ENCODE measurements at regions of chr2 and their contacts with region 1.

Region 1: DNA sequence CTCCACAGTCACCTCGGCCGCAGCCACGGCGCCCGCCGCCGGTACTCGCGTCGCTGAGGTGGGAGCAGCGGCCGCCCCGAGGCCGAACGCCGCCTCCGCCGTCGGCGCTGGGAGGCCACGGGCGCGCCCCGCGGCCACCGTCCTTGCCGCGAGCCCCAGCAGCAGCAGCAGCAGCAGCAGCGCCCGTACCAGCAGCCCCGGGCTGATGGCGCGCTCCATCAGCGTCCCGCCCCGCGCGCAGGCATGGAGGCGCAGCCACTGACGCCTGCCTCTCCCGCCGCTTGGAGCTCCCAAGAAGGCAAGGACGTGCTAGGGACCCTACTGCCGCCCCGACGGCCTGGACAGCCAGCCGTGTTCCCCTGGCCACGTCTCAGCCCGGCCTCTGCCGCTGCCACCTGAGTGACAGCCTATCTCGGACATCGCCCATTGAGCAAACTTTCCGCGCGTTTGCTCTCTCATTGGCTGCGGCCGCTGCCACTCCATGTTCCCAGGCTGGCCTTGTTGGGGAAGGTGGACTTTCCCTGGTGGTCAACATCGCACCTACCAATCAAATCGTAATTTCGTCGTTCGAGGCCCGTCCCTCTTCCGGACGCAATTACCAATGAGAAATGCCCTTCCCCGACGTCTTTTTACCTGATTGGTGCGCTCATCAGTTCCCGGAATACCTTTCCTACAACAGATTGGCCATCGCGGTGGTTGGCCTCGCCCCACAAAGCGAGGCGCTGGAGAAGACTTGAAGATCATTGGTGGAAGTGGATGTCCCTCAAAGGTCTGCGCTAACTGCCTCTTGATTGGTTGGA is at the start of gene EIF2AK3:
- DNase-seq: peak; percentile 96 to 99
- ATAC-seq: peak; percentile 78 to 92 (median 82)
- H3K4me3 ChIP-seq: peak within 1 kb of the TSS; percentile 90
- H3K4me3 Mint-ChIP-seq: peak within 1 kb of the TSS; percentile 91
- H3K27ac ChIP-seq: peak within 1 kb of the TSS; percentile 98
- H3K27ac Mint-ChIP-seq: no peak within 1 kb of the TSS
- H3K4me1 ChIP-seq: peaks cover 19% of the 10 kb centered on the region
- H3K4me1 Mint-ChIP-seq: peaks cover 6% of the 10 kb centered on the region in 2 donors
- H3K27me3 ChIP-seq: no peaks in the 10 kb centered on the region
- H3K27me3 Mint-ChIP-seq: no peaks in the 10 kb centered on the region
- CTCF ChIP-seq: no peak
- total RNA-seq, gene EIF2AK3: 29.9 to 43.7 (median 33.4) TPM

Region 2: DNA sequence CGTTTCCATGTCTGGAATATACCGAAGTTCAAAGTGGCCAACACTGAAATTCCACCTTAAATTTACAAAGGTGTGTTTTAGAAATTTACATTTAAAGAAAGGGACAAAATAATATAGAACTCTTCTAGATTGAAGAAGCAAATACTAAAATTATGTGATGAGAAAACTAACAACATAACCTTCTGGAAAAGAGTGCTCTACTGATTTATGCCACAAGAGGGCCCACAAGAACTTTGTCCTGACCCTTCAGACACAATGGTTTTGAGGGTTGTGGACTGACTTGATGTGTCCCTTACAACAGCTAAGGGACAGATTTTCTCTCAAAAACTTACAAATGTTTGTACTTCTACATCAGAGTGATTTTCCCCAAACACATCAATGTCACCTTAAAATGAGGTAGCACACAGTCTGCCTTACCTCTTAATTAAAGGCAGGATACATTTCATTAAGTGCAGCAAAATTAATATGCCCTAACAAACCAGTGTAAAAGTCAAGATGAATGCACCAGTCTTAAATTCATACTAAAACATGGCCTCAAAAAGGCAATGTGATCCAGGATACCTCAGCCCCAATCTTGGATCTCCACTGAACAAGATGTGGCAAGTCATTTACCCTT is 36.1 kb before region 1 on chr2:
- intact Hi-C with region 1: loop called (anchors 5 kb)
- DNase-seq: peak in 1 of 2 donors; percentile 74
- ATAC-seq: peak; percentile 88 to 99 (median 93)
- H3K4me3 ChIP-seq: no peak overlapping the region
- H3K4me3 Mint-ChIP-seq: no peak overlapping the region
- H3K27ac ChIP-seq: no peak overlapping the region
- H3K27ac Mint-ChIP-seq: peak overlapping the region in 1 of 2 donors; percentile 48
- H3K4me1 ChIP-seq: no peaks in the 10 kb centered on the region
- H3K4me1 Mint-ChIP-seq: peaks cover 6 to 7% of the 10 kb centered on the region in 2 donors
- H3K27me3 ChIP-seq: no peaks in the 10 kb centered on the region
- H3K27me3 Mint-ChIP-seq: no peaks in the 10 kb centered on the region
- CTCF ChIP-seq: peak; percentile 87

Region 3: DNA sequence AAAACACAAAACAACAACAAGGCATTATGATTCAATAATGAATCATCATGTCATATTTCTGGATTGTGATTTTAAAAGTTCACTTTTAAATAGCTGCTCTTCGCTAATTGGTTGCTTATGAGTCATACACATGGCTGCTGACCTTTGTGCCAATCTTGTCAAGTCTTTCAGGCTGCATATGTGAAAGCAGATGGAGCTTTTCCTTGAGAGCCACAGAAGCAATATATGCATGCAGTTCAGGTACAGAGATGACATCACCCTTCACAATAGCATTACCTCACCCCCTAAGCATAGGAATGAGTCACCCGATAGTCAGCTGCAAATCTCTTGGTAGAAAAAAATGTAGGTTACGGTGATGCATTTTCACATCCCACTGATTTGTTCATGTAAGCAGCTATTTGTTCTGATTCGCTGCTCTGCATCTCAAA is 27.2 kb before region 1 on chr2:
- intact Hi-C with region 1: loop called (anchors 1 kb)
- DNase-seq: peak in 1 of 2 donors; percentile 79
- ATAC-seq: peak; percentile 85 to 94 (median 89)
- H3K4me3 ChIP-seq: no peak overlapping the region
- H3K4me3 Mint-ChIP-seq: no peak overlapping the region
- H3K27ac ChIP-seq: peak overlapping the region; percentile 85
- H3K27ac Mint-ChIP-seq: peak overlapping the region; percentile 47 to 73
- H3K4me1 ChIP-seq: no peaks in the 10 kb centered on the region
- H3K4me1 Mint-ChIP-seq: peaks cover 42 to 51% of the 10 kb centered on the region in 2 donors
- H3K27me3 ChIP-seq: no peaks in the 10 kb centered on the region
- H3K27me3 Mint-ChIP-seq: no peaks in the 10 kb centered on the region
- CTCF ChIP-seq: no peak

Region 4: DNA sequence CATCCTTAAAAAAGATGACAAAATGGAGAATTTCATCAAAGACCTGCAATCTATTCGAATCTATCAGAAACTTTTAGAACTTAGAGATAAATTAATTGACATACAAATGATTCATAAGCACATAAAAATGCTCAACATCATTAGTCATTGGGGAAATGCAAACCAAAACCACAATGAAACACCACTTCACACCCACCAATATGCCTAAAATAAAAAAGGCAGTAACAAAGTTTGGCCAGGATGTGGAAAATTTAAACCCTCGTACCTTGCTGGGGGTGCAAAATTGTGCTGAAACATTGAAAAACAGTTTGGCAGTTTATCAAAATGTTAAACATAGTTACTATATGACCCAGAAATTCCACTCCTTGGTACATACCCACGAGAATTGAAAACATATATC is 11.5 kb after region 1 on chr2:
- intact Hi-C with region 1: loop called (anchors 1 kb)
- DNase-seq: peak in 1 of 2 donors; percentile 50
- ATAC-seq: peak; percentile 49 to 78 (median 70)
- H3K4me3 ChIP-seq: no peak overlapping the region
- H3K4me3 Mint-ChIP-seq: peak overlapping the region; percentile 78
- H3K27ac ChIP-seq: no peak overlapping the region
- H3K27ac Mint-ChIP-seq: peak overlapping the region; percentile 68 to 76
- H3K4me1 ChIP-seq: peaks cover 13% of the 10 kb centered on the region
- H3K4me1 Mint-ChIP-seq: peaks cover 39 to 42% of the 10 kb centered on the region in 2 donors
- H3K27me3 ChIP-seq: no peaks in the 10 kb centered on the region
- H3K27me3 Mint-ChIP-seq: no peaks in the 10 kb centered on the region
- CTCF ChIP-seq: no peak

Region 5: GRCh38 chr2:88669371-88670214 is 42.3 kb after region 1 on chr2:
- intact Hi-C with region 1: loop called (anchors 5 kb)
- DNase-seq: peak in 1 of 2 donors; percentile 61
- ATAC-seq: peak; percentile 61 to 86 (median 82)
- H3K4me3 ChIP-seq: no peak overlapping the region
- H3K4me3 Mint-ChIP-seq: no peak overlapping the region
- H3K27ac ChIP-seq: no peak overlapping the region
- H3K27ac Mint-ChIP-seq: no peak overlapping the region
- H3K4me1 ChIP-seq: no peaks in the 10 kb centered on the region
- H3K4me1 Mint-ChIP-seq: no peaks in the 10 kb centered on the region
- H3K27me3 ChIP-seq: no peaks in the 10 kb centered on the region
- H3K27me3 Mint-ChIP-seq: peaks cover 0 to 4% of the 10 kb centered on the region in 2 donors
- CTCF ChIP-seq: peak; percentile 61

Region 6: GRCh38 chr2:88691339-88692183 is 64.3 kb after region 1 on chr2 and contains the start of gene RPIA:
- intact Hi-C with region 1: loop called (anchors 2 kb)
- DNase-seq: peak; percentile 96 to 99
- ATAC-seq: peak; percentile 94 to 99 (median 95)
- H3K4me3 ChIP-seq: peak within 1 kb of the TSS; percentile 53
- H3K4me3 Mint-ChIP-seq: peak within 1 kb of the TSS; percentile 98
- H3K27ac ChIP-seq: peak within 1 kb of the TSS; percentile 67
- H3K27ac Mint-ChIP-seq: peak within 1 kb of the TSS; percentile 89 to 95
- H3K4me1 ChIP-seq: peaks cover 16% of the 10 kb centered on the region
- H3K4me1 Mint-ChIP-seq: peaks cover 51 to 53% of the 10 kb centered on the region in 2 donors
- H3K27me3 ChIP-seq: no peaks in the 10 kb centered on the region
- H3K27me3 Mint-ChIP-seq: no peaks in the 10 kb centered on the region
- CTCF ChIP-seq: peak; percentile 43
- total RNA-seq, gene RPIA: 21.4 to 24.1 (median 22.4) TPM